ENCODE measurements at regions of chr20 and their contacts with region 1.

Region 1: DNA sequence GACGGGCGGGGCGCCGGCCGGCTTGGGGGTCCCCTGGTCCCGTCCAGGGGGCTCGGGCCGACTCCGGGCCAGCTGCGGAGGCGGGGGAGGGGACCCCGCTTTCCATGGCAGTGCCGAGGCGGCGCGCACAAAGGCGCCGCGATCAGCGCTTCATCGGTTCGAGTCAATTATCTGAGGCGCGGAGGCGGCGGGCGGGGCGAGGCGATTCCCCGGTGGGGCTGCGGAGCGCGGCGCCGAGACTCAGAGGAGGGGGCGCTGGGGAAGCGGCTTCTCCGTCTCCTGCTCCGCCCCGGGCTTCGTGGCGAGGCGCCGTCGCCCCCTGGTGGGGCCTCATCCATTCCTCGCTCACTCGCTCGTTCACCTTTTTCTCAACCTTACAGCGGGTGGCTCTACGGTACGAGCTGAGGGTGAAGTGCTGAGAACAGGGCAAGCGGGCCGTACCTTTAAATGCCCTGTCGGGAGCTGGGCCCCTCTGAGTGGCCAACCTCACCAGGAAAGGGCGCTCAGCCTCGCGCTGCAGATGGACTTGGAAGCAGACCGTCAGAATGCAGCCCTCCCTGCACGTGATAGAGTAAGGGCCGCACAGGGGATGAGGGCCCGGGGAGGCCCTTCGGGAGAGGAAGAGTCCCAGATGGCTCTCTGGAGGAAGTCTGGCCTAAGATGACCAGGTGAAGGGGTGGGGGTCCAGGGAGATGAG is 39.9 kb downstream of the SLC52A3 start:
- DNase-seq: peak; percentile 72
- ATAC-seq: peak; percentile 92

Region 2: GRCh38 chr20:610130-611046 is 118.0 kb before region 1 on chr20 and contains the start of gene TCF15:
- intact Hi-C with region 1: no loop called
- DNase-seq: peak; percentile 75
- ATAC-seq: peak; percentile 88
- total RNA-seq, gene TCF15: 13.4 TPM

Region 3: DNA sequence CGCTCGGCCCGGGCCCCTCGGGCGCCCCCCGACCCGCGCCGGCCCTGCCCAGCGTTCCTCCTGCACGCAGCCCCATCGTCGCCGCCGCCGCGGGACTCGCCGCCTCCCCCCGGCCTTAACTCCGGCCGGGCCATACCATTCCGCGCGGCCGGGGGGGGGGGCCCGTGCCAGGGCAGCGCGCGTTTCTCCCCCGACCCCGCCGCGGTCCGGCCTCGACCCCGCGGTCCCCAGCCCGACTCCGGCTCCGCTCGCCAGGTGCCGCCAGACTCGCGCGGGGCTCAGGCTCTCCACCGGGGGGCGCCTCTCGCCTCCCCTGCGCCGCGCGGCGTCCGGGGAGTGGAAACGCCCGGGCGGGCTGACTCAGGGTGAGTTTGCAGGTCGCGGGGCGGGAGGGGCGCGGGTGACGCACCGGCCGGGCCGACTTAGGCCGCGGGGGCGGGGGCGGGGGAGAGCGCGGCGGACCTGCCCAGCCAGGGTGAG is 75.2 kb before region 1 on chr20 and contains the start of gene SRXN1:
- intact Hi-C with region 1: loop called (anchors 5 kb)
- DNase-seq: peak; percentile 95
- ATAC-seq: peak; percentile 96
- total RNA-seq, gene SRXN1: 47.6 TPM

Measured in Right ventricle myocardium superior (tissue), 1 donor.